ENCODE measurements at regions of chr21 and their contacts with region 1.

Region 1: DNA sequence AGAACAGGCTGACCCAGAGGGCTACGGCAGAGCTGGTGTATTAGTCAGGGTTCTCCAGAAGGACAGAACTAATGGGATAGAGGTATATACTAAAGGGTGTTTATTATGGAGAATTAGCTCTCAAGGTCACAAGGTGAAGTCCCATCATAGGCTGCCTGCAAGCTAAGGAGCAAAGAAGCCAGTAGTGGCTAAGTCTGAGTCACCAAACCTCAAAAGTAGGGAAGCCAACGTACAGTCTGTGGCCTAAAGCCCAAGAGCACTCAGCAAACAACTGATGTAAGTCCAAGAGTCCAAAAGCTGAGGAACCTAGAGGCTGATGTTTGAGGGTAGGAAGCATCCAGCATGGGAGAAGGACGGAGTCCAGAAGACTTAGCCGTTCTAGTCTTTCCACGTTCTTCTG is 179.2 kb downstream of the BACH1 start:
- DNase-seq: no peak

Region 2: GRCh38 chr21:29849735-29850176 is 371.8 kb after region 1 on chr21:
- intact Hi-C with region 1: loop called (anchors 10 kb)
- DNase-seq: peak; percentile 22 to 85 (median 60)